BJ (cell line): ENCODE measurements at regions of chr3 and their contacts with region 1.

Region 1: DNA sequence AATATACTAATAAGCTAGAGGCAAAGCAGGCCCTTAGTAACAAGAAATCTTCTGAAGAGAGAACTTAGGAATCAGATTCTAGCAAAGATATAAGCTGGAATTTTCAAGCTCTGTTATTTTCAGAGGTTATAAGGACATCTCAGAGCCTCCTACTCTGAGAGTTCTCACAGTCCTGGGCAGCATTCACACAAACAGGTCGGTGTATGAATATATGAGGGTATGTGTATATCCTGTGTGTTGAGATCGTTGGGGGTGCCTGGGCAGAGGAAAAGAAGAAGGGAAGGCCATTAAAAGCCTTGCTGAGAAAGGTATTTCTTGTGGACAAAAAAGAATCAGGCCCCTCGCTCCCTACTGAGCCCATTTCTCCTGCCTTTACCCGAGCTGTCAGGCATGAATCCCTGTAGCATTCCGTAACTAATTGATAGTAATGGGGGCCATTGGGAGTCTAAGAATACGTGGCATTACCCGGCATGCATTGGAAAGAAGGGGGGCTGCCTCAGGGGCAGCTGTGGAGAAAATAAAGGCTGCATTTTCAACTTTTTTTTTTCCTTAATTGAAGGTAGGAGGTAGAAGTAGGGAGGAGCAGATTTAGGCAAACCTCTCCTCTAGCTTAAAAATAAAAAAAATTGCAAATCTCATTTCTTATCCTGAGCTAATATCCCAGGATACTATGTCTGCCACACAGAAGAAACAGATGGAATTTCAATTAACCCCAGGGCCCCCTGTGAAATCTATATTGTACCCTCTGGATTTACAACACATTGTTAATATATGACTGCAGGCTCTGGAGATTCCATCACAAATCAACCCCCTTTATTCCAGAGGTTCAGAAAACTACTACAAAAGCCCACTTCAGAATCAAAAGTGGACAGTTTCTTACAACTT is 103.8 kb downstream of the GTPBP8 start:
- DNase-seq: no peak
- H3K4me3 ChIP-seq: no peak overlapping the region
- H3K27me3 ChIP-seq: peaks cover 5% of the 10 kb centered on the region
- CTCF ChIP-seq: no peak

Region 2: DNA sequence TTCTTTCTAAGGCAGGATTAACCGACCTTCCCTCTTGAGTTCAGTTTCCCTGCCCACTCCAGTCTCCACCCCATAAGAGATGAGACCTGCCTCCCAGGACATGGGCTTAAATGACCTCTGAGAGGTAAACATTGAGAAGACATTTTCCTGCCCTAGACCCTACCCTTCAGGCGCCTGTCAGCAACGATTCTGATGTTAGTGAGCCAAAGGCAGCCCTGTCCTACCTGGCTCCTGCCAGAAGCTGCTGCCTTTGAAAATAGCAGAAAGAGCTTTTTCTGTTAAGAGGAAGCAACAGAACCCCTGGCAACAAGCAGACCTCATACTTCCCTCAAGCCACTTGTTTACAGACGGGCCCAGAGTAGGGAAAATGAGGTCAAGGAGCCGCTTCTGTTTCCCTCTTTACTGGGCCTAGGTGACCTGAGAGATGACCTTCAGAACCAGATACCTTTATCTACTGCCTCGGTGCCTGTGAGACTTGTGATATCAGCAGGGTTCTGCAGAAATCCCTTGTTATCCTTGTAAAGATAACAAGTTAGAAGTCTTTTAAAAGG is 299.9 kb before region 1 on chr3:
- CTCF ChIA-PET with region 1: no interaction called
- POLR2A ChIA-PET with region 1: no interaction called
- DNase-seq: no peak
- H3K4me3 ChIP-seq: no peak overlapping the region
- H3K27me3 ChIP-seq: no peaks in the 10 kb centered on the region
- CTCF ChIP-seq: no peak

Region 3: DNA sequence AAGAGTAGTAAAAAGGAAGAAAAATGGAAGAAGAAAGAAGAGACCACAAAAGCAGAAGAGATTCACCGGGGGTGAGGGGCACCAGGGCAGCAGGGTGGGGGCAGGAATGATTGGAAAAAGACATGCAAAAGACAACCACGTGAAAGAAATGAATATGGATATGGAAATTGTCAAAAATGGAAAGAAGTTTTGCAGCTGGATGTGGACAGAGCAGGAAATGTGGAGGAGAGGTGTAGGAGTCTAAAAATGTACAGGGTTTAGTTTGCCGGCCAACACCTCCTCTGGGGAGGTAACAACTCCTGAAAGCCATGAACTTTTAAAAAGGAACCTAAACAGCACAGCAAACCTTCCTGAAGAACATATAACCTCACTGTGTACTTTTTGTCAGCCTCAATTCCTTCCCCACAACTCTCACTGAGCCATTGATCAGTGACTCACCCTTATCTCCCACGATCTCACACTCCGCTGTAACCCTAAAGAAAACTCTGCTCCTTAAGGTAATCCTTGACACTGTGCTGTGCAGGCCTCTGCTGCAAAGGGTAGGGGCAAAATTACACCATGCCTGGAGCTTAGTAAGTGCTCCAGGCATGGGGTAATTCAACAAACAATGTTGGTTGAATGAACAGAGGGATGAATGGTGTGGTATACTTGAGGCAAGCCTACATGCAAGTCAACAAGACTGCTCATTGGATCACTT is 16.6 kb after region 1 on chr3:
- CTCF ChIA-PET with region 1: no interaction called
- POLR2A ChIA-PET with region 1: interaction called, 12 read pairs
- DNase-seq: no peak
- H3K4me3 ChIP-seq: no peak overlapping the region
- H3K27me3 ChIP-seq: no peaks in the 10 kb centered on the region; the same call in 1 of the 2 replicates
- CTCF ChIP-seq: no peak

Region 4: GRCh38 chr3:113516115-113516505 is 421.5 kb after region 1 on chr3:
- CTCF ChIA-PET with region 1: no interaction called
- POLR2A ChIA-PET with region 1: no interaction called
- DNase-seq: no peak
- H3K4me3 ChIP-seq: no peak overlapping the region
- H3K27me3 ChIP-seq: no peaks in the 10 kb centered on the region
- CTCF ChIP-seq: no peak